K562 (cell line): ENCODE measurements at regions of chr7 and their contacts with region 1.

Region 1: GRCh38 chr7:50142425-50143017 is 49.5 kb upstream of the ZPBP start:
- DNase-seq: peak in 3 of 4 experiments; percentile 23 to 55 (median 26)
- ATAC-seq: peak; percentile 69
- H3K4me3 ChIP-seq: no peak overlapping the region
- H3K27ac ChIP-seq: no peak overlapping the region
- H3K4me1 ChIP-seq: no peaks in the 10 kb centered on the region
- H3K27me3 ChIP-seq: peaks cover 5 to 14% of the 10 kb centered on the region in 2 experiments; a peak in 2 of 5 replicates
- CTCF ChIP-seq: peak; percentile 40 to 82 (median 45); a peak in 3 of 6 replicates
- EP300 ChIP-seq: 0 out of 2 replicates have a peak, but pooled peaks have one; percentile 3
- POLR2A ChIP-seq: no peak
- RAD21 ChIP-seq: peak; percentile 76 to 78

Region 2: GRCh38 chr7:50206453-50207250 is 64.1 kb after region 1 on chr7:
- CTCF ChIA-PET with region 1: interaction called, 3 read pairs
- POLR2A ChIA-PET with region 1: no interaction called
- in situ Hi-C with region 1: no loop called
- intact Hi-C with region 1: loop called (anchors 2 kb)
- DNase-seq: no peak
- ATAC-seq: no peak
- H3K4me3 ChIP-seq: no peak overlapping the region
- H3K27ac ChIP-seq: no peak overlapping the region
- H3K4me1 ChIP-seq: peaks cover 8 to 10% of the 10 kb centered on the region in 2 experiments
- H3K27me3 ChIP-seq: no peaks in the 10 kb centered on the region; a peak in 1 of 5 replicates
- CTCF ChIP-seq: no peak
- EP300 ChIP-seq: no peak
- POLR2A ChIP-seq: no peak
- RAD21 ChIP-seq: no peak

Region 3: GRCh38 chr7:50369143-50370026 is 226.9 kb after region 1 on chr7:
- CTCF ChIA-PET with region 1: interaction called, 31 read pairs
- POLR2A ChIA-PET with region 1: no interaction called
- in situ Hi-C with region 1: no loop called
- intact Hi-C with region 1: loop called (anchors 5 kb)
- DNase-seq: peak; percentile 70 to 88 (median 71)
- ATAC-seq: peak; percentile 90
- H3K4me3 ChIP-seq: no peak overlapping the region
- H3K27ac ChIP-seq: no peak overlapping the region
- H3K4me1 ChIP-seq: peaks cover 0 to 2% of the 10 kb centered on the region in 2 experiments; a peak in 1 of 5 replicates
- H3K27me3 ChIP-seq: no peaks in the 10 kb centered on the region
- CTCF ChIP-seq: peak; percentile 89 to 95 (median 92)
- EP300 ChIP-seq: no peak
- POLR2A ChIP-seq: no peak
- RAD21 ChIP-seq: peak; percentile 96 to 98

Region 4: DNA sequence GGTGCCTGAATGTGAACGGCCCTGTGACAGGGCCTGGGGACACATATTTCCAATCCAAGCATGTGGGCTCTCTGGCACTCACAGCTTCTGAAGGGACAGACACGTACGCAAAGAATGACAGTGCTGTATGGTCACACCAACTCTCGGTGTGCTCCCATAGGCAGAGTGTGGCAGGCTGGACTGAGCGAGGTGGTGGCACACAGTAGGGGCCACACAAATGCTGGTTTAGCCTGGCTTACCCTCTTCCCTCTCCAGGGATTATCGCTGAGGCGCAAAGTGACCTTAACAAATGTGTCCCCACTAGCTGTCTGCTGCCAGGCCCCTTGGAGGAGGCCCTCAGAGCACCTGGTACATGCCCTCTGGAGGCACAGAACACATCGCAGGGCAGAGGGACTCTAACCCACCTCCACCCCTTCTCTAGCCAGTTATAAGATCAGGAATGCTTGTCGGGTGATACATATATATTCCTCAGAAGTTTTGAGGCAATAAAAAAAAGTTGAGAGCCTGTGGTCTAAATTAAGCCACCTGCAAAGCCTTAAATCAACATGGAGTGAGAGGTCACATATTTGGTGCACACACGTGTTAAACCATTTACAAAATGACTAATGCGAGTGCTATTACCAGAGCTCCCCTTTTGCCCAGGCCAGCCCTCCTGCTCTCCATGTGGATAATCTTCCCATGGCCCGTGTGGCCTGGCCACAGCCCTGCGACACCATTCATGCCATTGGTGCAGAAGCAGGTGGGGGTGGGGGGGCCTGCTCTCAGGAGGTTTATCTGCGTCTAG is 903.0 kb after region 1 on chr7:
- CTCF ChIA-PET with region 1: no interaction called
- POLR2A ChIA-PET with region 1: no interaction called
- in situ Hi-C with region 1: no loop called
- intact Hi-C with region 1: loop called (anchors 5 kb)
- DNase-seq: no peak
- ATAC-seq: no peak
- H3K4me3 ChIP-seq: no peak overlapping the region
- H3K27ac ChIP-seq: no peak overlapping the region
- H3K4me1 ChIP-seq: no peaks in the 10 kb centered on the region
- H3K27me3 ChIP-seq: peaks cover 5 to 22% of the 10 kb centered on the region in 2 experiments; a peak in 4 of 5 replicates
- CTCF ChIP-seq: no peak
- EP300 ChIP-seq: no peak
- POLR2A ChIP-seq: no peak
- RAD21 ChIP-seq: no peak

Region 5: GRCh38 chr7:51366930-51367613 is 1224.6 kb after region 1 on chr7:
- CTCF ChIA-PET with region 1: no interaction called
- POLR2A ChIA-PET with region 1: no interaction called
- in situ Hi-C with region 1: loop called (anchors 25 kb)
- intact Hi-C with region 1: no loop called
- DNase-seq: peak; percentile 66 to 78 (median 66)
- ATAC-seq: peak; percentile 97
- H3K4me3 ChIP-seq: no peak overlapping the region
- H3K27ac ChIP-seq: no peak overlapping the region
- H3K4me1 ChIP-seq: no peaks in the 10 kb centered on the region; a peak in 2 of 5 replicates
- H3K27me3 ChIP-seq: peaks cover 0 to 10% of the 10 kb centered on the region in 2 experiments; a peak in 1 of 5 replicates
- CTCF ChIP-seq: peak; percentile 74 to 82 (median 80)
- EP300 ChIP-seq: no peak
- POLR2A ChIP-seq: no peak
- RAD21 ChIP-seq: peak; percentile 69 to 77